PC-9 (cell line): ENCODE measurements at regions of chr7 and their contacts with region 1.

Region 1: GRCh38 chr7:13017333-13017853 is 330.0 kb downstream of the ARL4A start:
- DNase-seq: peak; percentile 23 to 68
- H3K4me3 ChIP-seq: peak overlapping the region; percentile 19; the same call in 1 of the 2 replicates
- H3K27ac ChIP-seq: peak overlapping the region; percentile 19
- H3K4me1 ChIP-seq: peaks cover 16% of the 10 kb centered on the region
- H3K27me3 ChIP-seq: no peaks in the 10 kb centered on the region
- CTCF ChIP-seq: no peak

Region 2: DNA sequence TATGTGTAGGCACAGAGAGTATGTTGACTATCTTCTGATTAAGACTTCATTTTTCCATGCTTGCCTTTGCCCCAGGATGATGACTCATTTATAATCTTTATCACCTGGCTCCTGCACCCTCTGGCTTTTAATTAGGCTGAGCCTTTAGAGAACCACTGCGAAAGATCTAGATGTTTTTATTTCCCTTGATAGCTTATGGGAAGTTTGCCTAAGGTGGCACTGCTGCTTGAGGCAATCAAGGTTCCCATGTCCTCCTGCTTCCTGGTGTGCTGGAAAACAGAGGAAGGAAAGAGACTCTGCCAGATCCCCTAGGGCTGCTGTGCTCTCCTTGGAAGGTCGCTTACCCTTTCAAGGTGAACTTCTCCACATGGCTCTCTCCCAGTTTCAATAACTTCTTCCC is 215.3 kb before region 1 on chr7:
- CTCF ChIA-PET with region 1: no interaction called
- POLR2A ChIA-PET with region 1: no interaction called
- intact Hi-C with region 1: loop called (anchors 10 kb)
- DNase-seq: peak in 1 of 2 experiments; percentile 66
- H3K4me3 ChIP-seq: peak overlapping the region; percentile 29
- H3K27ac ChIP-seq: peak overlapping the region; percentile 45
- H3K4me1 ChIP-seq: peaks cover 30% of the 10 kb centered on the region
- H3K27me3 ChIP-seq: no peaks in the 10 kb centered on the region
- CTCF ChIP-seq: no peak

Region 3: DNA sequence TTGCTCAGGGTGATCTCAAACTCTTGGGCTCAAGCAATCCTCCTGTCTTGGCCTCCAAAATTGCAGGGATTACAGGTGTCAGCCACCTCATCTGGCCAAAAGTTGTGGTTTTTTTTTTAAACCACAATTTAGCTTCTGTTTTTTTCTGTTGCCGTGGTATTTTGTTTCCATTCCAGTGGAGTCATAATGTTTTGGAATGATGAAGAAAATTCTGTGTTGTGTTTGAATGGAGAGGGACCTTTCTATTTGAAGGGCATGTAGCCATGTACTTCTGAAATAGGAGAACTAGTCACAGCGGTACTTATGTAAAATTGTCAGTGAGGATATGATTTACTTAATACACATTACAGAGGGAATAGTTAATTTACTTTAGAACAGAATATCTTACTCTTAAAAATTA is 128.7 kb before region 1 on chr7:
- CTCF ChIA-PET with region 1: no interaction called
- POLR2A ChIA-PET with region 1: no interaction called
- intact Hi-C with region 1: no loop called
- DNase-seq: no peak
- H3K4me3 ChIP-seq: no peak overlapping the region
- H3K27ac ChIP-seq: no peak overlapping the region
- H3K4me1 ChIP-seq: no peaks in the 10 kb centered on the region
- H3K27me3 ChIP-seq: no peaks in the 10 kb centered on the region
- CTCF ChIP-seq: no peak